Right ventricle myocardium superior (tissue), 1 donor: ENCODE measurements at regions of chr2 and their contacts with region 1.

Region 1: DNA sequence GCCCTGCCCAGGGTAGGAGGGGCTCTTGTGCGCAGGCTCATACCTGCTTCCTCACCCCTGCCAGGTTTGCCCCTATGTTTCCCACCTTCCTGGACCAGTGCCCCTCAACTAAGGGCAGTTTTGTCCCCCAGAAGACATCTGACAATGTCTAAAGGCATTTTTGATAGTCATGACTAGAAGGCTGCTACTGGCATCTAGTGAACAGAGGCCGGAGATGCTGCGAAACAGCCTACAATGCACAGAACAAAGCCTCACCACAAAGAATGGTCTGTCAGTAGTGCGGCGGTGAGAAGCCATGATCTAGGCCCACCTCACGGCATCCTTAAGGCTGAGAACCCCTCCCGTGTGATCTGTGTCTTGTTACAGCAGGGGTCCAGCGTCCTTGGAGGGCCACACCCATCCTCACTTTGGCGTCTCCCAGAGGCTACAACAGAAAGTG is 96.0 kb downstream of the TMEM17 start:
- DNase-seq: no peak
- ATAC-seq: peak; percentile 19

Region 2: GRCh38 chr2:61910603-61911002 is 499.4 kb before region 1 on chr2:
- intact Hi-C with region 1: loop called (anchors 5 kb)
- DNase-seq: no peak
- ATAC-seq: no peak

Region 3: DNA sequence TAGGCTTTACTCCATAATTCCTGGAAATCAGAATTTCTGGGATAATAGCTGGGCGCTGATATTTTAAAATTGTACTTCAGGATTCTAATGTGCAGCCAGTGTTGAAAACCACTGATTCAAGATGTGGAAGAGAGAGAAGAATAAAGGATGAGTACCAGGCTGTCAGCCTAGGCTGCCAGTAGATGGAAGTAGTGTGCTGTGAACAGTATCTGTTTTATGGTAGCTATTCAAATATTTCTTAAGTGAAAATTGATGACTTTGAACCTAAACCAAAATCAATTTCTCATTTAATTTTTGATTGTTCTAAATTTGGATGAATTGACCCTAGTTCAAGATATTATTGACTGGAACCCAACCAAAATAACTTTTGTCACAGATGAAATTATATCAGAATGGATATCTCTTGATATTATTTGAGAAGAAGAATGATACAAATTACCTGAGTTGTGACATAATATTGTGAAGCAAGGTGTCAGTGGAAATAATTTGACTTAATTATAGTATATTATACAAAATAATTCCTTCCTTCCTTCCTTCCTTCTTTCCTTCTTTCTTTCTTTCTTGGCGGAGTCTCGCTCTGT is 416.5 kb before region 1 on chr2:
- intact Hi-C with region 1: loop called (anchors 2 kb)
- DNase-seq: no peak
- ATAC-seq: peak; percentile 83

Region 4: GRCh38 chr2:62195421-62196277 is 214.4 kb before region 1 on chr2 and contains the start of gene B3GNT2:
- intact Hi-C with region 1: loop called (anchors 5 kb)
- DNase-seq: peak; percentile 90
- ATAC-seq: peak; percentile 94
- total RNA-seq, gene B3GNT2: 14.6 TPM

Region 5: GRCh38 chr2:62287899-62288880 is 121.8 kb before region 1 on chr2:
- intact Hi-C with region 1: loop called (anchors 10 kb)
- DNase-seq: peak; percentile 87
- ATAC-seq: peak; percentile 62

Region 6: GRCh38 chr2:62586981-62587380 is 176.9 kb after region 1 on chr2:
- intact Hi-C with region 1: no loop called
- DNase-seq: no peak
- ATAC-seq: no peak